ENCODE measurements at regions of chr5 and their contacts with region 1.

Region 1: GRCh38 chr5:154196955-154197652 is 6.6 kb downstream of the GALNT10 start:
- DNase-seq: no peak
- H3K4me3 Mint-ChIP-seq: no peak overlapping the region
- H3K27ac Mint-ChIP-seq: peak overlapping the region; percentile 87
- H3K4me1 Mint-ChIP-seq: peaks cover 63% of the 10 kb centered on the region
- H3K27me3 Mint-ChIP-seq: no peaks in the 10 kb centered on the region

Region 2: GRCh38 chr5:154179846-154180710 is 17.0 kb before region 1 on chr5:
- CTCF ChIA-PET with region 1: interaction called, 37 read pairs
- DNase-seq: peak; percentile 52
- H3K4me3 Mint-ChIP-seq: no peak overlapping the region
- H3K27ac Mint-ChIP-seq: no peak overlapping the region
- H3K4me1 Mint-ChIP-seq: peaks cover 8% of the 10 kb centered on the region
- H3K27me3 Mint-ChIP-seq: peaks cover 36% of the 10 kb centered on the region

Region 3: DNA sequence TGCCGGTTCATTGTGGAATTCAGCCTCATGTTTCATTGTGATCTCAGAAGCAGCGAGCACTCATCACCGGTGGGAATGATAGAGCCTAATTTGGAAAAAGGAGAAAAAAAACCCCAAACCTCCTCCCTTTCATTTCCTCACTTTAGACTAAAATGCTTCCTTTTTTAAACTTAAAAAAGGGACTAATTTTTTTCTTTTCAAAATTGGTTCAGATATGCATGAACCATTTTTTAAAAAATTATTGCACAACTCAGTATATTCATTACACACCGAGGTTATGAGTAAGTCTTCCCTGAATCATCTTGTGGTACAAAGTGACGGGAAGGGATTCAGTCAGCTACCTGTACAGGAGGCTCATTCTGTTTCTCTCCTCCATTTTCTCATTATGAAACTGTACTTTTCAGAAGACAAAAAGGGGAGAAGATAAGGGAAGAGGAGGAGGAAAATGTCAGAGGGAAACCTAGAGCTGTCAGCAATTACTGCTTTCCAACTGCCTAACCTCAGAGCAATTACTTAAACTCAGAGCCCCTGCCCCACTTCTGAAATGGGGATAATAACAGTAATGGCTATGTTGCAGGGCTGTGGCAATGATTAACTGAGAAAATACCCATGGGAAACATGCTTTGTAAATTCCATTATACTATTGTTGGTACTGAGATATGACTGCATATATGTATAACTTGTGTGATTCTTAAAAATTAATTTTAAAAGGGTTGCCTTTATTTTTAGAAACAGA is 17.4 kb after region 1 on chr5:
- CTCF ChIA-PET with region 1: interaction called, 23 read pairs
- DNase-seq: no peak
- H3K4me3 Mint-ChIP-seq: no peak overlapping the region
- H3K27ac Mint-ChIP-seq: peak overlapping the region; percentile 17
- H3K4me1 Mint-ChIP-seq: peaks cover 41% of the 10 kb centered on the region
- H3K27me3 Mint-ChIP-seq: no peaks in the 10 kb centered on the region

Measured in activated naive CD4-positive, alpha-beta T cell treated with anti-CD3 and anti-CD28 coated beads, Interleukin-2, amount 10 ng/mL, durations not matched to agents 7 days and 5 days (primary cell).